Activated B cell treated with CpG ODN at 0.5 μM for 24 hours (primary cell): ENCODE measurements at regions of chr18 and their contacts with region 1.

Region 1: DNA sequence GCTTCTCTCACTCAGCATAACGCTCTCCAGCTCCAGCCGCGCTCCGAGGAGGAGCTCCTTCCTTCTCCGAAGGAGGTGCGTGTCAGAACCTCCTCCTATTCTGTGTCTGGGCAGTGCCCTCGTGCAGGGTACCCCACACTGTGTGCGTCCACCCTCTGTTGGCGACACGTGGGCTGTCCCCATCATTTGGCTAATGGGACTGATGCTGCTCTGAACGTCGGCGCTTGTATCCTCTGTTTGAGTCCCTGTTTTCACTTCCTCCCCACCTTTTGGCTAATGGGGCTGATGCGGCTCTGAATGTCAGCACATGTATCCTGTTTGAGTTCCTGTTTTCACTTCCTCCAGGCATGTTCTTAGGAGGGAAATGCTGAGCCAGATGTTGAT is 22.2 kb downstream of the KCNG2 start:
- DNase-seq: peak; percentile 42
- ATAC-seq: peak; percentile 94
- H3K4me3 Mint-ChIP-seq: peak overlapping the region; percentile 73
- H3K27ac Mint-ChIP-seq: peak overlapping the region; percentile 84
- H3K4me1 Mint-ChIP-seq: peaks cover 36% of the 10 kb centered on the region
- H3K27me3 Mint-ChIP-seq: peaks cover 3% of the 10 kb centered on the region
- CTCF ChIP-seq: no peak

Region 2: GRCh38 chr18:79458131-79458838 is 361.7 kb before region 1 on chr18:
- CTCF ChIA-PET with region 1: no interaction called
- POLR2A ChIA-PET with region 1: no interaction called
- intact Hi-C with region 1: no loop called
- DNase-seq: no peak
- ATAC-seq: no peak
- H3K4me3 Mint-ChIP-seq: no peak overlapping the region
- H3K27ac Mint-ChIP-seq: no peak overlapping the region
- H3K4me1 Mint-ChIP-seq: peaks cover 46% of the 10 kb centered on the region
- H3K27me3 Mint-ChIP-seq: no peaks in the 10 kb centered on the region
- CTCF ChIP-seq: no peak

Region 3: DNA sequence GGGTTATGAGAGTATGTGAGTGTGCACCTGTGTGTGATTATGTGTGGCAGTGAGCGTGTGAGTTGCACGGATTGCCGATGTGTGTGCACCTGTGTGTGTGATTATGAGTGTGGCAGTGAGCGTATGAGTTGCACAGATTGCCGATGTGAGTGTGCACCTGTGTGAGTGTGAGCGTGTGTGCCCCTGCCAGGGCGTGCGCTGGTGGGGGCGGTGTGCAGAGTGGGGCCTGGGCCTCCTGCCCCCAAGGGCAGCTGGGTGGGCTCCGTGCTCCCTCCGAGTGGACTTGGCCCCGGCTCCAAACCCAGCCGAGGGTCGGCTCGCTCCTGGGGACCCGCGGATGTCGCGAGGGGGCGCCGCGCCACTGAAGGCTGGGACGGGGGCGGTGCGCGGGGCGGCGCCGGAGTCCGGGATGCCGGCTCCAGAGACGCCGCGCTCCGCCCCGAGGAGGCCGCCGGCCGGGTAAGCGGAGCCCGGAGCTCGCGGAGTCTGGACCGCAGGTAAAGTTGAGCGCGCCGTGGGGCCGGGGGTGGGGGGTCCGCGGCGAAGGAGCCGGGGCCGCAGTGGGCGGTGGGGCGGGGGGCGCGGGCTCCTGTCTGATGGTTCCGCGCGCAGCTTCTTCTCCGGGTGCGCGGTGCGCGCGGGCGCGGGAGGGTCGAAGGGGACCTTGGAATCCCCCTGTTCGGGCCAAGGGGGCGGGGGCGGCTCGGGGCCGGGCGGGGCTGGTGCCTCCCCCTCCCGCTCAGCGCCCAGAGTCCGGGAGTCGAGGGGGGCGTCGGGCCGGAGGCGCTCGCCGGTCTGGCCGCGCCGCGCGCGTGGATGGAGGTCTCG is 22.2 kb before region 1 on chr18 and contains the start of gene KCNG2:
- CTCF ChIA-PET with region 1: no interaction called
- POLR2A ChIA-PET with region 1: no interaction called
- intact Hi-C with region 1: loop called (anchors 1 kb)
- DNase-seq: peak; percentile 32
- ATAC-seq: peak; percentile 66
- H3K4me3 Mint-ChIP-seq: peak within 1 kb of the TSS; percentile 72
- H3K27ac Mint-ChIP-seq: no peak within 1 kb of the TSS
- H3K4me1 Mint-ChIP-seq: peaks cover 22% of the 10 kb centered on the region
- H3K27me3 Mint-ChIP-seq: peaks cover 25% of the 10 kb centered on the region
- CTCF ChIP-seq: no peak
- total RNA-seq, gene KCNG2: not detected in 2 replicates

Region 4: GRCh38 chr18:79924814-79925731 is 105.1 kb after region 1 on chr18:
- CTCF ChIA-PET with region 1: no interaction called
- POLR2A ChIA-PET with region 1: no interaction called
- intact Hi-C with region 1: no loop called
- DNase-seq: no peak
- ATAC-seq: no peak
- H3K4me3 Mint-ChIP-seq: no peak overlapping the region
- H3K27ac Mint-ChIP-seq: no peak overlapping the region
- H3K4me1 Mint-ChIP-seq: no peaks in the 10 kb centered on the region
- H3K27me3 Mint-ChIP-seq: no peaks in the 10 kb centered on the region
- CTCF ChIP-seq: no peak